ENCODE measurements at regions of chr14 and their contacts with region 1.

Region 1: DNA sequence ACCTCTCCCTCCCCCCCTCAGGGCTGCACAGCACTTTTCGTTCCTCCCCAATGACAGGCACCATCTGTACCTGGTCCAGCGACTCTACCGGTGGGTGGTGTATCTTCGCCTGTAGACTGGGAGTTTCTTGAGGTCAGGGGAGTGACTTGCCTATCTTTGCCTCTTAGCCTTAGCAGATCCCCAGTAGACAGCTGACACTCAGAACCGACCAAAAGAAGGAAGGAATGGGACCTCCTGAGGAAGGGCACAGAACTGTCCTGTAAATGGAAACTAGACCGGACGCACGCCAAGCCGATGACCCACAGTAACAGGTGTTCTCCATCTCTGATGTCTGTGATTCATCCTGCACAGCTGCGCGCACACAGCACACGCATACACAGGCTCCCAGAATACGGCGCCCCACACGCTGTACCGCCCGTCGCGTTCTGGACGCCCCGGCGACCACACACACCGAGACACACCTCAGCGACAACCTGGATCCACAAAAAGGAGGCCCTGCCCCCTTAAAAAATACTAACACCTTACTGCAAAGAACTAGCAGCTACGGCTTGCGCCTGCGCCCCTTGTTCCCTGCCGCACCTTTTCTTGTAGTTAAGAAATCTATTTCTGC is 673 bp upstream of the TTC9 start:
- DNase-seq: peak; percentile 56
- H3K4me3 Mint-ChIP-seq: peak overlapping the region; percentile 94
- H3K27ac Mint-ChIP-seq: peak overlapping the region; percentile 84
- H3K4me1 Mint-ChIP-seq: peaks cover 54% of the 10 kb centered on the region
- H3K27me3 Mint-ChIP-seq: no peaks in the 10 kb centered on the region

Region 2: DNA sequence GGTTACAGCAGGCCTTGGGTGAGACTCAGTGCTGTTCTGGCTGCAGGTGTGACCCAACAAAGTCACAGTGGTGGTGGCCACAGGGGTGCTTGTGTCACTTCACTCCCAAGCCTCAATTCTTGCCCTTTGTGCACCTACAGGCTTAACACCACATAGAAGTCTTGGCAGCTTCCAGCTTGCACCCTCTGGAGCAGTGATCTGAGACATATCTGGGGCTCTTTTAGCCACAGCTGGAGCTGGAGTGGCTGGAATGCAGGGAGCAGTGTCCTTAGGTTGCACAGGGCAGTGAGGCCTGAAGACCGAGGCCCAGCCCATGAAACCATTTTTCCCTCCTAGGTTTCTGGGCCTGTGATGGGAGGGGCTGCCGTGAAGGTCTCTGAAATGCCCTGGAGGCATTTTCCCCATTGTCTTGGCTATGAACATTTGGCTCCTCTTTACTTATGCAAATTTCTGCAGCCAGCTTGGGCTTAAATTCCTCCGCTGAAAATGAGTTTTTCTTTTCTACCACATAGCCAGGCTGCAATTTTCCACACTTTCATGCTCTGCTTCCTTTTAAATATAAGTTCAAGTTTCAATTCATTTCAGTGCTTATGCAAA is 151.4 kb before region 1 on chr14:
- CTCF ChIA-PET with region 1: no interaction called
- POLR2A ChIA-PET with region 1: no interaction called
- DNase-seq: no peak
- H3K4me3 Mint-ChIP-seq: no peak overlapping the region
- H3K27ac Mint-ChIP-seq: no peak overlapping the region
- H3K4me1 Mint-ChIP-seq: no peaks in the 10 kb centered on the region
- H3K27me3 Mint-ChIP-seq: no peaks in the 10 kb centered on the region

Region 3: GRCh38 chr14:70655110-70655826 is 14.2 kb after region 1 on chr14:
- CTCF ChIA-PET with region 1: interaction called, 14 read pairs
- POLR2A ChIA-PET with region 1: interaction called, 192 read pairs
- DNase-seq: peak; percentile 81
- H3K4me3 Mint-ChIP-seq: peak overlapping the region; percentile 76
- H3K27ac Mint-ChIP-seq: peak overlapping the region; percentile 100
- H3K4me1 Mint-ChIP-seq: peaks cover 93% of the 10 kb centered on the region
- H3K27me3 Mint-ChIP-seq: no peaks in the 10 kb centered on the region

Region 4: DNA sequence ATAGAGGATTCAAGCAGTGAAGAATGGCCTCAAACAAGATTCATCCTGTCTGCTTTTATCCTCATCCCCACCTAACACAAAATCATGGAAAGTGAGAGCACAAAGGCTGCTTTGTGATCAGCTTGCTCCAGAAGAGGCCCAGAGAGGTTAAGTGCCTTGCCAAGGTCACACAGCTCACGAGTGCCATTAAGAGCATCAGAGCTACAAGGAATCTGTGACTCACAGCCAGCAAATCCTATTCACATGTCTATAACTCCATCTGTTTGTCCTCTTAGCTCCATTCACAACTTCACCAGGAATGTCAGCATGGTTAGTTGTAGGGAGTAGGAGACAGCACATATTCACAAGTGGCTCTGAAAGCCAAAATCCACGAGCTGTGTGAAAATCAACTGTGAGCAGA is 80.5 kb after region 1 on chr14:
- CTCF ChIA-PET with region 1: no interaction called
- POLR2A ChIA-PET with region 1: no interaction called
- DNase-seq: no peak
- H3K4me3 Mint-ChIP-seq: no peak overlapping the region
- H3K27ac Mint-ChIP-seq: no peak overlapping the region
- H3K4me1 Mint-ChIP-seq: no peaks in the 10 kb centered on the region
- H3K27me3 Mint-ChIP-seq: no peaks in the 10 kb centered on the region

Measured in activated CD4-positive, alpha-beta memory T cell treated with anti-CD3 and anti-CD28 coated beads, Interleukin-2, amount 10 ng/mL, durations not matched to agents 7 days and 5 days (primary cell).